A673 (cell line): ENCODE measurements at regions of chr19 and their contacts with region 1.

Region 1: DNA sequence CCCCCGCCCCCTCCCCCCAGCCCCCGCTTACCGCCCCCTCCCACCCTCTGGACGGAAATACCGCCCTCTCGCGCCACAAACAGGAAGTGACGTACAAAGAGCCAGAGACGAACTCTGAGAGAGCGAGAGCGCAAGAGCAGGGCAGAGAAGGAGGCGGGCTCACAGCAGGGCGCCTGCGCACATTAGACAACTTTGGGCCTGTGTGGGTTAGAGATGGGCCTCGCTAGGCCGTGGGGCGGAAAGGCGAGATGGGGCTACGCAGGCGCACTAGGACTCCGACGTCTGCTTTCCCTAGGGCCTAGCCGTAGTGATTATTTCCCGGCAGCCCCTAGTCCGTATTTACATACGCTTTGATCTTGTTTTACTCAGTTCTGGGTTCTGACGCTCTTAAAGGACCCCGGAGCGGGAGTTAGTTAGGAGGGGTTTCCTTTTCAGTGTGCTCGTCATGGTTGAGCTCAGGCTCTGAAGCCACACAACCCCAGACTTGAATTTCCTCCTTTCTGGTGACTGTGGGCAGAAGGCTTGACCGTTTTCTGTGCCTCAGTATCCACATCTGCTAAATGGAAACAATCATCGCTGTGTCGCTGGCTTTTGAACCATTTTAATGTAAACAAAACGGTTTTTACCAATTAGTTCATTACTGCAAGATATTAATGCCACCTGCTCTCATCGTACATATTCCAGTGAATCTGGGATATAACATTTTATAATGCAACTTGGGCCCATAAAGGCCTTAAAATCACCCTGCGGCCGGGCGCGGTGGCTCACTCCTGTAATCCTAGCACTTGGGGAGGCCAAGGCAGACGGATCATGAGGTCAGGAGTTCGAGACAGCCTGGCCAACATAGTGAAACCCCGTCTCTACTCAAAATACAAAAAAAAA is 449 bp upstream of the AKT2 start:
- DNase-seq: peak; percentile 100
- H3K4me3 ChIP-seq: peak overlapping the region; percentile 86
- H3K27ac ChIP-seq: peak overlapping the region; percentile 86
- H3K4me1 ChIP-seq: peaks cover 46% of the 10 kb centered on the region
- H3K27me3 ChIP-seq: no peaks in the 10 kb centered on the region
- CTCF ChIP-seq: no peak

Region 2: GRCh38 chr19:39704181-39705044 is 581.2 kb before region 1 on chr19 and contains the start of gene LGALS14:
- CTCF ChIA-PET with region 1: no interaction called
- POLR2A ChIA-PET with region 1: no interaction called
- intact Hi-C with region 1: no loop called
- DNase-seq: no peak
- H3K4me3 ChIP-seq: no peak within 1 kb of the TSS
- H3K27ac ChIP-seq: no peak within 1 kb of the TSS
- H3K4me1 ChIP-seq: no peaks in the 10 kb centered on the region
- H3K27me3 ChIP-seq: peaks cover 26% of the 10 kb centered on the region
- CTCF ChIP-seq: no peak
- total RNA-seq, gene LGALS14: not detected in 2 replicates

Region 3: GRCh38 chr19:39878398-39878797 is 407.2 kb before region 1 on chr19:
- CTCF ChIA-PET with region 1: interaction called, 13 read pairs
- POLR2A ChIA-PET with region 1: no interaction called
- intact Hi-C with region 1: no loop called
- DNase-seq: no peak
- H3K4me3 ChIP-seq: no peak overlapping the region
- H3K27ac ChIP-seq: no peak overlapping the region
- H3K4me1 ChIP-seq: no peaks in the 10 kb centered on the region
- H3K27me3 ChIP-seq: no peaks in the 10 kb centered on the region
- CTCF ChIP-seq: no peak

Region 4: DNA sequence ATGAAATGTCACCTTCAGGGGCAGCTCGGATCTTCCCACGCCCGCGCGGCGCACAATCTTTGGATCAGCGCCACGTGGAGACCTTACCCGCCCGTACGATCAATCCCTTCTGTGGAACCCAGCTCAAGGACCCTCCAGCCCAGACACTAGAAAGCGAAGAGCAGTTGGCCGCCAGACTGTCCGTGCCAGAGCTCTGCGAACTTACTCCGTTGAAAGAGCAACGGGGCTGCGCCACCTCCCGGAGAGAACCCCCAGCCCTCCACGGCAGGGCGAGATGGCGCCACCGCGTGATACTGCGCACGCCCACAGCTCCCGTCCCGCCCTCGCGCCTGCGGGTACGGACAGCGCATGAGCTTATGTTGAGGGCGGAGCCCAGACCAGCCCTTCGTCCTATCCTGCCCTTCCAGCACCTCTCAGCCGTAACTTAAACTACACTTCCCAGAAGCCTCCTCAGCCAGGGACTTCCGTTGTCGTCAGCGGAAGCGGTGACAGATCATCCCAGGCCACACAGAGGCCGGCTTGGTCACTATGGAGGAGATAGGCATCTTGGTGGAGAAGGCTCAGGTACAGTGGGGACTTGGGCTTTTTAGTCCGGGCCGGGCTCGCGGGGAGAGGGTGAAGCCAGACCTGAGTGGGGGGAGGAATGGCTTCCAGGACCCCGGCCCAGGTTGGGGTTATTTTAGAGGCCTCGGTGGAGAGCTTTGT is 314.8 kb before region 1 on chr19 and contains the start of gene PSMC4:
- CTCF ChIA-PET with region 1: no interaction called
- POLR2A ChIA-PET with region 1: interaction called, 13 read pairs
- intact Hi-C with region 1: no loop called
- DNase-seq: peak; percentile 99
- H3K4me3 ChIP-seq: peak within 1 kb of the TSS; percentile 68
- H3K27ac ChIP-seq: peak within 1 kb of the TSS; percentile 95
- H3K4me1 ChIP-seq: peaks cover 27% of the 10 kb centered on the region
- H3K27me3 ChIP-seq: no peaks in the 10 kb centered on the region
- CTCF ChIP-seq: peak; percentile 96
- total RNA-seq, gene PSMC4: 268 and 291 TPM in 2 replicates

Region 5: DNA sequence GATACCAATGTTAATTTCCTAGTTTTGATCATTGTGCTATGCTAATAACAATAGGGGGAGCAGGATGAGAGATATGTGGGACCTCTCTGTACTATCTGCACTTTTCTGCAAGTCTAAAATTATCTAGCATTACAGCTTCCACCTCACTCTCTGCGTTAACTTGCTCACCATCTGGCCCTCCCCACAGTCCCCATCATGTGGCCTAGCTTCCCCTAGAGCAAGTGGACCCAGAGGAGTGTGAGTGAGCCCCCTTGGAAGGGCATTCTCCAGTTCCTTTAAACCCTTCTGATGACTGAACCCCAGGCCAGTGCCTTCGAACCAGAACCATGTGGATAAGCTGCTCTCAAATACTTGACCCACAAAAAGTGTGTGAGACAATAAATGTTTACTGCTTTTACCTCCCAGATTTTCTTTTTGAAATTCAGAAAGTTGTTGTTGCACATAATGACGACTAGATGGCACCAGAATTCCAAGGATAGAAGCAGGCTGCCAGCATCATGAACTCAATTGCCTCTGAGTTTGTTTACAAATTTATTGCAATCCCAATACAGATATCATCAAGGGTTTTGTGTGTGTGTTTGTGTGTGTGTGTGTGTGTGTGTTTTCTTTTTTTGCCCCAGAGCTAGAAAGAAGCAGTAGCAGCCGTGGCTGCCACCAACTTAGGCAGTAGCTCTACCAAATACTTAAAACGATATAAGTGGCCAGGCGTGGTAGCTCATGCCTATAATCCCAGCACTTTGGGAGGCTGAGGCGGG is 145.9 kb before region 1 on chr19:
- CTCF ChIA-PET with region 1: no interaction called
- POLR2A ChIA-PET with region 1: no interaction called
- intact Hi-C with region 1: loop called (anchors 10 kb)
- DNase-seq: peak; percentile 73
- H3K4me3 ChIP-seq: no peak overlapping the region
- H3K27ac ChIP-seq: no peak overlapping the region
- H3K4me1 ChIP-seq: peaks cover 24% of the 10 kb centered on the region
- H3K27me3 ChIP-seq: no peaks in the 10 kb centered on the region
- CTCF ChIP-seq: peak; percentile 80

Region 6: GRCh38 chr19:41175801-41176777 is 890.5 kb after region 1 on chr19:
- CTCF ChIA-PET with region 1: no interaction called
- POLR2A ChIA-PET with region 1: no interaction called
- intact Hi-C with region 1: no loop called
- DNase-seq: peak; percentile 40
- H3K4me3 ChIP-seq: no peak overlapping the region
- H3K27ac ChIP-seq: no peak overlapping the region
- H3K4me1 ChIP-seq: no peaks in the 10 kb centered on the region
- H3K27me3 ChIP-seq: no peaks in the 10 kb centered on the region
- CTCF ChIP-seq: no peak